Endothelial cell of umbilical vein (primary cell): ENCODE measurements at regions of chr16 and their contacts with region 1.

Region 1: GRCh38 chr16:58336332-58337089 is 41.7 kb upstream of the PRSS54 start:
- DNase-seq: peak; percentile 79
- H3K4me3 ChIP-seq: peak overlapping the region in 1 of 3 experiments; percentile 50
- H3K27ac ChIP-seq: no peak overlapping the region
- H3K4me1 ChIP-seq: peaks cover 7% of the 10 kb centered on the region
- H3K27me3 ChIP-seq: peaks cover 0 to 1% of the 10 kb centered on the region in 2 experiments
- CTCF ChIP-seq: peak; percentile 85 to 94
- POLR2A ChIP-seq: no peak

Region 2: DNA sequence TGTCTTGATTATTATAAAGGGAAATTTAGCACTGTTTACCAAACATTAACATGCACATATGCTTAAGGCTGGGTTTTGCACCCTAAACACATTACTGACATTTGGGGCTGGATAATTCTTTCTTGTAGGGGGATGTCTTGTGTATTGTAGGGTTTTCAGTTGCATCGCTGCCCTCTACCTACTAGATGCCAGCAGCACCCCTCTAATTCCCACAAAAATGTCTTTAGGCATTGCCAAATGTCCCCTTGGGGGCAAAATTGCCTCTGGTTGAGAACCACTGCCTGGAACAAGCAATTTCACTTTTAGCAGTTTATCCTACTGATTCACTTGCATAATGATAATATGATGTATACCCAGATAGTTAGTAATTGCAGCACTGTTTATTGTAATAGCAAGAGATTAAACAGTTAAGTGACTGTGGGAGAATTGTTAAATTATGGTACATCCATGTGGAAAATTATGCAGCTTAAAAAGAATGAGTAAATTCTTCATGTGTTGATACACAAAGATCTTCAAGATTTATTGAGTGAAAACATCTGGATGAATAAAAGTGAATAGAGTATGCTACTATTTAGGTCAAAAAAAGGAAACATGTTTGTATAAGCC is 60.1 kb before region 1 on chr16:
- CTCF ChIA-PET with region 1: no interaction called
- POLR2A ChIA-PET with region 1: no interaction called
- dilution Hi-C with region 1: no loop called
- intact Hi-C with region 1: no loop called
- DNase-seq: no peak
- H3K4me3 ChIP-seq: no peak overlapping the region
- H3K27ac ChIP-seq: no peak overlapping the region
- H3K4me1 ChIP-seq: no peaks in the 10 kb centered on the region
- H3K27me3 ChIP-seq: peaks cover 0 to 6% of the 10 kb centered on the region in 2 experiments
- CTCF ChIP-seq: no peak
- POLR2A ChIP-seq: no peak

Region 3: DNA sequence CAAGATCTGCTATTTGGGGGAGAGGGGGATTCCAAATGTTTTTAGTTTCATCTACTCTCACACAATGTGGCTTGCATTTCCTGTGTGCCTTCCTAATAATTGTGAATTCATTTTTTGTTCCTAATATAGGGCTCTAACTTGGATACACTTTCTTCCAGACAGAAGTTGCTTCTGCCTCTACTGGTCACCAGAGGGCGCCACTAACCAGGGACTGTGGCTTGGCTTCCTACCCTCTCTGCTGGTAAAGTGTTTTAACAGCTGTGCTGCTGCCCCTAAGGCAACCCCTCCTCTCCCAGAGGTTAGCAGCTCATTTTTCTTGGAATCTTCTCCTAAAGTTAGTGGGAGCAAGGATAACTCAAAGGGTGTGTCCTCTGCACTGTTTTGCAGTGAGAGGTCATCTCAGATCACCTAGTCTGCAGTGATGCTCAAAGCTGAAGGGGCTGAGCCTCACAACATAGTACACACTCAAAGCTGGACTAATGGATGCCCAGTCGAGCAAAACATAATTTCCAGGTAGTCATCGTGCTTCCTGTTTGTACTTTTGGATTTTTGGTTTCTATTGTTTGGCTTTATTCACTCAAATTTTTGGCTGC is 36.7 kb before region 1 on chr16:
- CTCF ChIA-PET with region 1: interaction called, 21 read pairs
- POLR2A ChIA-PET with region 1: no interaction called
- dilution Hi-C with region 1: no loop called
- intact Hi-C with region 1: no loop called
- DNase-seq: peak; percentile 36
- H3K4me3 ChIP-seq: no peak overlapping the region
- H3K27ac ChIP-seq: no peak overlapping the region
- H3K4me1 ChIP-seq: no peaks in the 10 kb centered on the region
- H3K27me3 ChIP-seq: peaks cover 0 to under 1% of the 10 kb centered on the region in 2 experiments
- CTCF ChIP-seq: peak; percentile 82 to 87
- POLR2A ChIP-seq: no peak

Region 4: GRCh38 chr16:58435779-58436178 is 99.3 kb after region 1 on chr16:
- CTCF ChIA-PET with region 1: interaction called, 10 read pairs
- POLR2A ChIA-PET with region 1: no interaction called
- dilution Hi-C with region 1: no loop called
- intact Hi-C with region 1: no loop called
- DNase-seq: no peak
- H3K4me3 ChIP-seq: no peak overlapping the region
- H3K27ac ChIP-seq: no peak overlapping the region
- H3K4me1 ChIP-seq: no peaks in the 10 kb centered on the region
- H3K27me3 ChIP-seq: no peaks in the 10 kb centered on the region
- CTCF ChIP-seq: peak in 1 of 2 donors; percentile 34
- POLR2A ChIP-seq: no peak

Region 5: GRCh38 chr16:58494981-58495520 is 158.5 kb after region 1 on chr16:
- CTCF ChIA-PET with region 1: interaction called, 25 read pairs
- POLR2A ChIA-PET with region 1: no interaction called
- dilution Hi-C with region 1: no loop called
- intact Hi-C with region 1: no loop called
- DNase-seq: peak; percentile 88
- H3K4me3 ChIP-seq: no peak overlapping the region
- H3K27ac ChIP-seq: peak overlapping the region; percentile 19
- H3K4me1 ChIP-seq: no peaks in the 10 kb centered on the region
- H3K27me3 ChIP-seq: no peaks in the 10 kb centered on the region
- CTCF ChIP-seq: peak; percentile 51 to 61
- POLR2A ChIP-seq: no peak

Region 6: GRCh38 chr16:58661199-58661830 is 324.8 kb after region 1 on chr16:
- CTCF ChIA-PET with region 1: interaction called, 50 read pairs
- POLR2A ChIA-PET with region 1: no interaction called
- dilution Hi-C with region 1: no loop called
- intact Hi-C with region 1: loop called (anchors 2 kb)
- DNase-seq: peak; percentile 81
- H3K4me3 ChIP-seq: no peak overlapping the region
- H3K27ac ChIP-seq: no peak overlapping the region
- H3K4me1 ChIP-seq: no peaks in the 10 kb centered on the region
- H3K27me3 ChIP-seq: no peaks in the 10 kb centered on the region
- CTCF ChIP-seq: peak; percentile 55 to 65
- POLR2A ChIP-seq: no peak